ENCODE measurements at regions of chr11 and their contacts with region 1.

Region 1: DNA sequence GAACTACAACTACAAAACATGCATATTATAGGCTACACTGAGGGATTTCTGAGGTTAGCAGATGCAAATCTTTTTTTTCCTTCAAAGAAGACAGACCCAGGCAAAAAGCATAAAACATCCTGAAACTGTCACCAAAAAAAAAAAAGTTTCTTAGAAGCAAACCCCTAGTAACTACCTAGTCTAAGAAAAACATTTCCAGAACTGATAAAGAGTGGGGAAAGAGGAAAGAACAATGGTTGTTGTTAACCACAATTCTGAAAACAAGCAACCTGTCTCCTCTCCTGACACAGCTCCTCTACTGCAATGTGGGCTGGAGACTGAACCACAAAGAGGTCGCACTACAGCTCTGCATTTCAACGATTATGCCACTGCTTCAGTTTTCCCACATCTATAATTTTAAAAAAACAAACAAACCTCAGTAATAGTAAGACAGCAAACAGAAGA is 15.0 kb downstream of the DENND5A start:
- DNase-seq: peak; percentile 52
- H3K4me3 Mint-ChIP-seq: no peak overlapping the region
- H3K27ac Mint-ChIP-seq: peak overlapping the region; percentile 56
- H3K4me1 Mint-ChIP-seq: peaks cover 70% of the 10 kb centered on the region
- H3K27me3 Mint-ChIP-seq: no peaks in the 10 kb centered on the region

Region 2: GRCh38 chr11:7936615-7937014 is 1313.5 kb before region 1 on chr11:
- CTCF ChIA-PET with region 1: no interaction called
- intact Hi-C with region 1: no loop called
- DNase-seq: no peak
- H3K4me3 Mint-ChIP-seq: no peak overlapping the region
- H3K27ac Mint-ChIP-seq: no peak overlapping the region
- H3K4me1 Mint-ChIP-seq: no peaks in the 10 kb centered on the region
- H3K27me3 Mint-ChIP-seq: peaks cover 35% of the 10 kb centered on the region

Region 3: GRCh38 chr11:9231848-9232177 is 18.3 kb before region 1 on chr11:
- CTCF ChIA-PET with region 1: interaction called, 3 read pairs
- intact Hi-C with region 1: loop called (anchors 2 kb)
- DNase-seq: peak; percentile 27
- H3K4me3 Mint-ChIP-seq: peak overlapping the region; percentile 68
- H3K27ac Mint-ChIP-seq: peak overlapping the region; percentile 56
- H3K4me1 Mint-ChIP-seq: peaks cover 58% of the 10 kb centered on the region
- H3K27me3 Mint-ChIP-seq: no peaks in the 10 kb centered on the region

Region 4: GRCh38 chr11:9314291-9315036 is 64.3 kb after region 1 on chr11 and contains the start of gene TMEM41B:
- CTCF ChIA-PET with region 1: interaction called, 3 read pairs
- intact Hi-C with region 1: loop called (anchors 2 kb)
- DNase-seq: peak; percentile 99
- H3K4me3 Mint-ChIP-seq: peak within 1 kb of the TSS; percentile 99
- H3K27ac Mint-ChIP-seq: peak within 1 kb of the TSS; percentile 92
- H3K4me1 Mint-ChIP-seq: peaks cover 37% of the 10 kb centered on the region
- H3K27me3 Mint-ChIP-seq: peaks cover 13% of the 10 kb centered on the region
- total RNA-seq, gene TMEM41B: 27.8 to 30.5 TPM